Activated B cell treated with CpG ODN at 0.5 μM for 24 hours (primary cell): ENCODE measurements at regions of chr22 and their contacts with region 1.

Region 1: GRCh38 chr22:39514373-39514973 is 5.9 kb upstream of the ATF4 start:
- DNase-seq: no peak
- ATAC-seq: peak; percentile 45
- H3K4me3 Mint-ChIP-seq: no peak overlapping the region
- H3K27ac Mint-ChIP-seq: peak overlapping the region; percentile 24
- H3K4me1 Mint-ChIP-seq: peaks cover 28% of the 10 kb centered on the region
- H3K27me3 Mint-ChIP-seq: no peaks in the 10 kb centered on the region
- CTCF ChIP-seq: no peak

Region 2: GRCh38 chr22:39439170-39439569 is 75.3 kb before region 1 on chr22:
- CTCF ChIA-PET with region 1: interaction called, 15 read pairs
- POLR2A ChIA-PET with region 1: interaction called, 10 read pairs
- intact Hi-C with region 1: loop called (anchors 1 kb)
- DNase-seq: no peak
- ATAC-seq: no peak
- H3K4me3 Mint-ChIP-seq: peak overlapping the region; percentile 22
- H3K27ac Mint-ChIP-seq: no peak overlapping the region
- H3K4me1 Mint-ChIP-seq: peaks cover 56% of the 10 kb centered on the region
- H3K27me3 Mint-ChIP-seq: no peaks in the 10 kb centered on the region
- CTCF ChIP-seq: no peak

Region 3: GRCh38 chr22:39496131-39496838 is 18.2 kb before region 1 on chr22:
- CTCF ChIA-PET with region 1: interaction called, 33 read pairs
- POLR2A ChIA-PET with region 1: interaction called, 86 read pairs
- intact Hi-C with region 1: loop called (anchors 2 kb)
- DNase-seq: peak; percentile 33
- ATAC-seq: peak; percentile 77
- H3K4me3 Mint-ChIP-seq: no peak overlapping the region
- H3K27ac Mint-ChIP-seq: peak overlapping the region; percentile 41
- H3K4me1 Mint-ChIP-seq: peaks cover 16% of the 10 kb centered on the region
- H3K27me3 Mint-ChIP-seq: no peaks in the 10 kb centered on the region
- CTCF ChIP-seq: peak; percentile 51

Region 4: GRCh38 chr22:39502109-39502788 is 12.2 kb before region 1 on chr22 and contains the start of gene MIEF1:
- CTCF ChIA-PET with region 1: interaction called, 33 read pairs
- POLR2A ChIA-PET with region 1: interaction called, 86 read pairs
- intact Hi-C with region 1: no loop called
- DNase-seq: peak; percentile 89
- ATAC-seq: peak; percentile 96
- H3K4me3 Mint-ChIP-seq: peak within 1 kb of the TSS; percentile 95
- H3K27ac Mint-ChIP-seq: peak within 1 kb of the TSS; percentile 89
- H3K4me1 Mint-ChIP-seq: peaks cover 34% of the 10 kb centered on the region
- H3K27me3 Mint-ChIP-seq: no peaks in the 10 kb centered on the region
- CTCF ChIP-seq: no peak
- total RNA-seq, gene MIEF1: 38.2 and 41.3 TPM in 2 replicates